Prostate gland (tissue), 2 donors: ENCODE measurements at regions of chr4 and their contacts with region 1.

Region 1: DNA sequence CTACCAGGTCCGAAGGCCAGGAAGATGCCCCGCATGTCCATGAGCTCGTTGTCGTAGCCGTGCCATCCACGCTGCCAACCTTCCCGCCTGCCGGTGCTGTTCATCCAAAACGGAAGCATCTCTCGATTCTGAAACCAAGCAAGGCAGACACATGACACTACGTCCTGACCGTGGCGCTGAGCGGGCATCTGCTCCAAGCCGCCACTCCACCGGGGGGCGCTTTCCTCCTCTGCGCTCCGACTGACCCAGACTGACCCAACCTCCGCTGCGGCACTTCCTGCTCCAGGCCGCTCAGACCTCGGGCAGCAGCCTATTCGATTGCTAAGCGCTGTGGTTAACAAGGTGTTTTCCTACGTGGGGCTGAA is 120.5 kb downstream of the ENPP6 start:
- DNase-seq: peak; percentile 36
- H3K4me3 ChIP-seq: peak overlapping the region; percentile 9 to 23
- H3K27ac ChIP-seq: peak overlapping the region in 1 of 2 donors; percentile 14
- H3K4me1 ChIP-seq: no peaks in the 10 kb centered on the region
- H3K27me3 ChIP-seq: no peaks in the 10 kb centered on the region
- CTCF ChIP-seq: peak in 2 of 4 experiments; percentile 44 to 52
- POLR2A ChIP-seq: no peak

Region 2: GRCh38 chr4:183738081-183738673 is 359.0 kb before region 1 on chr4:
- intact Hi-C with region 1: no loop called
- DNase-seq: no peak
- H3K4me3 ChIP-seq: no peak overlapping the region
- H3K27ac ChIP-seq: no peak overlapping the region
- H3K4me1 ChIP-seq: no peaks in the 10 kb centered on the region
- H3K27me3 ChIP-seq: no peaks in the 10 kb centered on the region
- CTCF ChIP-seq: no peak
- POLR2A ChIP-seq: no peak

Region 3: DNA sequence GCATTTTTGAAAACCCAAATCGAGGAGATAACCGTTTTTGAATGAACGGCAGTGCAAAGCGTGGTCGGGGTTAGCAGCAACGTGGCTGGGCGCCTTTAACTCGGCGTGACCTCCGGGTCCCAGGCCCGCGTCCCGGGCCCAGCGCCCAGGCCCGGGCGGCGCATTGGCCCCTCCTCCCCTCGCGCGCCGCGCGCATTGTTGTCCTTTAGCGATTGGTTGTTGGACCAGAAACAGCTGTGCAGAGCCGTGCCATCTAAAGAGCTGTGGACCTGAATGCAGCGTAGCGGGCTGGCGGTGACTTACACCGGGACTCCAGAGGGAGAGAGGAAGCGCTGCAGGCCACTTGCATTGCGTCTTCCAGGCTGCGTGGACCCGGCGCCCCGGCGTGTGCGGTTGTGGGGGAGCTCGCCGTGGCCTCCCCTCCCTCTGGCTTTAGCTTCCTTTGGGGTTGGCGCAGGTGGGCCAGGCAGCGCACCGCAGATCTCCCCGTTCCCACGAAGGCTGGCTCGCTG is 192.1 kb before region 1 on chr4 and contains the start of gene STOX2:
- intact Hi-C with region 1: loop called (anchors 5 kb)
- DNase-seq: peak; percentile 73
- H3K4me3 ChIP-seq: peak within 1 kb of the TSS; percentile 41 to 49
- H3K27ac ChIP-seq: peak within 1 kb of the TSS; percentile 46 to 63
- H3K4me1 ChIP-seq: no peaks in the 10 kb centered on the region
- H3K27me3 ChIP-seq: no peaks in the 10 kb centered on the region
- CTCF ChIP-seq: no peak
- POLR2A ChIP-seq: peak; percentile 42
- total RNA-seq, gene STOX2: 12.9 to 14.9 TPM

Region 4: DNA sequence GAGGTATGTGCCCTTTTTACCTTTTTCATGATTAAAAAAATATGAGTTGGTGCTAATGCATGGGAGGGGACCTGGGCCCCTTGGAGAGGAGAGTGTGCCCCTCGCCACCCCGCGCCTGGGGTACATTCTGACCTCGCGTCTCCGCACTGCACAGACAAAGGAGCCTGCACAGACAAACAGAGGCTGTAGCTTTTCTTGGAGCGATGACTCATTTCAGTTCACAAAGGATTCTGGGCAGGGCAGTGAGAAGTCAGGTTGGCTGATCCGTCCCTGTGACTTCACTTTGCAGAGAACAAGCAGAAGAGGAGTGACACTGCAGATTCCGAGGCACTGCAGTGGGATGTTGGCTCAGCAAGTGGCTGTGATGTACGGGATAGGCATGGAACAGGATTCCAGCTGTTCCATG is 109.2 kb before region 1 on chr4:
- intact Hi-C with region 1: loop called (anchors 2 kb)
- DNase-seq: peak; percentile 81
- H3K4me3 ChIP-seq: peak overlapping the region; percentile 19 to 28
- H3K27ac ChIP-seq: peak overlapping the region; percentile 8 to 32
- H3K4me1 ChIP-seq: no peaks in the 10 kb centered on the region
- H3K27me3 ChIP-seq: no peaks in the 10 kb centered on the region
- CTCF ChIP-seq: no peak
- POLR2A ChIP-seq: peak; percentile 22

Region 5: DNA sequence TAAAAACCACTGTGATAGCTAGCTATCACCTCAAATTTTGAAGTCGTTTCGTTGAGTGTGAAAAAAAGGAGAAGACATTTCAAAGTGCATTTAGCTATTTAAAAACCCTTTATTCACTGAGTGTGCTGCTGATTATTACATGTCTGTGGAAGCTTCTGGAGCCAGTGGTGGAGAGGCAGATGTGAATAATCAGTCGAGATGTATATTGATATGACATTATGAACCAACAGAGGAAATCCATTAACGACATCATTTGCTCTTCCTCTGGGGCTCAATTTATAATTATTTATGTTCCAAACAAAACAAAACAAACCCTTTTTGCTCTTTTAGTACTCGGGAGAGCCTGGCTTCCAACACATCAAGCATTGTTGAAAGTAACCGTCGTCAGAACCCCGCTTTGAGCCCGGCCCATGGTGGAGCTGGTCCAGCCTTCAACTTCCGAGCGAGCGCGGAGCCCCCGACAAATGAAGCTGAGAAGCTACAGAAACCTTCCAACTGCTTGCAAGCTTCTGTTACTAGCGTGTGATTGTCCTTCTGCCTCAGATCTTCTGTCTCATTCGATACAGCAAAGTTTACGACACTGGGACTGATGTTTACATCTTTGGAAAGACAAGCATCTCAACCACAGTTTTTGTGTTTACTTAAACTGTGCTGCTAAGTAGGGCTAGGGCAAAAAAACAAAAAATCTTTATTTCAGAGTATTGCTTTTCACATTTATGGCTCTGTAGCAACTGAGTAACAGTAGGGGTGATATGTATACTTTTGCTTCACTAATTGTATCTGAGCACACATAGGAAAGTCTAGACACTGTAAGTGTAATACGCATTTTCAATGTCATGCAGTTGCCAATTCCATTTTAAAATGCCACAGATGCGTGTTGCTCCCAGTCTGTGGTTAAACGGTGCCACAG is 80.2 kb before region 1 on chr4:
- intact Hi-C with region 1: loop called (anchors 5 kb)
- DNase-seq: no peak
- H3K4me3 ChIP-seq: no peak overlapping the region
- H3K27ac ChIP-seq: peak overlapping the region in 1 of 2 donors; percentile 17
- H3K4me1 ChIP-seq: no peaks in the 10 kb centered on the region
- H3K27me3 ChIP-seq: no peaks in the 10 kb centered on the region
- CTCF ChIP-seq: no peak
- POLR2A ChIP-seq: no peak

Region 6: DNA sequence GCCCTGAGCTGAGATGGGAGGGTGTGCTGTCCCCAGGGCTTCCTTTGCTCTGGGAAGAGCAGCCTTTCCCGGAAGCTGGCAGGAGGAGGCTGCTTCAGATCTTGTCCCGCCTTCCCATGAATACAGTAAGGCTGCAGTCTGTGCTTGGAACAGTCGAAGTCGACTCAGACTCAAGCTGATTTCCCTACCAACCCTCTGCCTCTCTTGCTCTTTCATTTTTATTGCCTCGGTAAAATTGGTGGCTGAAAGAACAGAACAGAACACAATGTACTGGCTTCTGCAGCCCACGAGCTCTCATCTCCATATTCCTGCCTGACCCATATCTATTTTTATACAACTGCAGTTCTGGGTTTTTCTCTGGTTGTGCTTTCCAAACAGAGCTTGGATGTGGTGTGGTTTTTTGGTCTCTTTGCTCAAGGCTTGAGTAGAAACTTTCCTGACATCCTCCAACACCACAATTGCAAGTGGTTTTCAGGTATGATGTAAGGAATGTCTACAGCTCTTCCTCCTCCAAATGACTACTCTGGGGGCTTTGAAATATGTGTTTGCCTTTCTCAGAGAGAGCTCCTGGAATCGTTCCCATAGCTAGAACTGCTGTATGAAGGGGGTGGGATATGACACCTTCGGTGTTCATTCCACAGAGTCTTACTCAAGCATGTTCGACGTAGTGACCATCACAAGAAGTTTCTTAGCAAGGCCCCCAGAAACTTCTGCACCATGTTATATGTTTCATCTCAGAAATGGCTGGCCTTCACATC is 59.1 kb after region 1 on chr4:
- intact Hi-C with region 1: loop called (anchors 2 kb)
- DNase-seq: no peak
- H3K4me3 ChIP-seq: no peak overlapping the region
- H3K27ac ChIP-seq: peak overlapping the region; percentile 63 to 66
- H3K4me1 ChIP-seq: no peaks in the 10 kb centered on the region
- H3K27me3 ChIP-seq: no peaks in the 10 kb centered on the region
- CTCF ChIP-seq: no peak
- POLR2A ChIP-seq: no peak